Heart left ventricle (tissue), 16 donors: ENCODE measurements at regions of chr17 and their contacts with region 1.

Region 1: DNA sequence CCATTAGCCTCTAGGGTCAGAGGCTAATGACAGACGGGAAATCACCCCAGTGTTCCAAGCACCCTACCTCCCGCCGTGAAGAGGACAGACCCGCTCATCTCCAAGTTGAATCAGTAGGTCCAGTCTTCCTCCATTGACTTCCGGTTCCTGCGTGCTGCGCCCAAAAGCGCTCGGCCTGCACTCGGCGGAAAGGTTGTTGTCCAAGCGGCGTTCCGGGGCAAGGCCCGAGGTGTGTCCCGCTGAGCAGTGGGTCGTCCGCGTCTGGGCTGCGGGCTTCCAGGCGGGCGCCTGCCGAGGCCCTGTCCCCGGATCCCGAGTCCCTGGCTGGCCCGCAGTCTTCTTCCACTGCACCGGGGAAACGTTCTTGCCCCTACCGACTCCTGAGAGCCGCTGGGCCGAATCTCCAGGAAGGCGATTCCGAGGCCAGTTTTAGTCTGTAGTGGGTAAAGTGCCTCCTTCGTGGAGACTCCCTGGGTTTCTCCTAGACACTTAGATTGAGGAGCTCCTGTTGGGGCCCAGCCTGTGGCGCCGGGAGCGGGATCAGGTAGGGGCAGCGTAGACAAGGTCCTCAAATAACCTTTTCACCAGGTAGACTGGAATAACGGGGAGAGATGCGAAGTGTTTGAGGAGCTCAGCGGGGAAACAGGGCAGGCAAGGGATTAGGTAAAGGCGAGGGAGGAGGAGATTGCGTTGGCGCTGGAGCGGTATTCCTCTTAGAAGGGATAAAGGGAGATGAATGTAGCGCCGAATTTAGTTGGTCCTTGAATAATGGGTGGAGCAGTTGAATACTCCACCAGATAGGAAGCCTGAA is at the start of gene TEFM:
- DNase-seq: peak; percentile 89 to 94 (median 92)
- ATAC-seq: peak; percentile 89 to 99 (median 98)
- H3K4me3 ChIP-seq: peak within 1 kb of the TSS; percentile 54 to 95 (median 86)
- H3K27ac ChIP-seq: peak within 1 kb of the TSS; percentile 6 to 96 (median 90)
- H3K4me1 ChIP-seq: peaks cover 0 to 28% (median 15%) of the 10 kb centered on the region in 12 donors
- H3K27me3 ChIP-seq: no peaks in the 10 kb centered on the region
- CTCF ChIP-seq: peak in 1 of 12 donors; percentile 5
- POLR2A ChIP-seq: peak in 1 of 2 donors; percentile 55
- total RNA-seq, gene TEFM: 5.2 to 22.9 (median 13.1) TPM

Region 2: GRCh38 chr17:30970831-30971567 is 64.7 kb after region 1 on chr17 and contains the start of gene RNF135:
- intact Hi-C with region 1: loop called in 5 of 10 experiments (anchors 1 to 10 kb)
- DNase-seq: peak; percentile 89 to 91 (median 90)
- ATAC-seq: peak; percentile 87 to 98 (median 97)
- H3K4me3 ChIP-seq: peak within 1 kb of the TSS; percentile 56 to 95 (median 76)
- H3K27ac ChIP-seq: peak within 1 kb of the TSS; percentile 75 to 98 (median 91)
- H3K4me1 ChIP-seq: peaks cover 0 to 66% (median 6%) of the 10 kb centered on the region in 12 donors
- H3K27me3 ChIP-seq: no peaks in the 10 kb centered on the region
- CTCF ChIP-seq: peak in 7 of 12 donors; percentile 4 to 54 (median 46)
- POLR2A ChIP-seq: peak in 1 of 2 donors; percentile 80
- total RNA-seq, gene RNF135: 3.9 to 19.1 (median 5.6) TPM

Region 3: DNA sequence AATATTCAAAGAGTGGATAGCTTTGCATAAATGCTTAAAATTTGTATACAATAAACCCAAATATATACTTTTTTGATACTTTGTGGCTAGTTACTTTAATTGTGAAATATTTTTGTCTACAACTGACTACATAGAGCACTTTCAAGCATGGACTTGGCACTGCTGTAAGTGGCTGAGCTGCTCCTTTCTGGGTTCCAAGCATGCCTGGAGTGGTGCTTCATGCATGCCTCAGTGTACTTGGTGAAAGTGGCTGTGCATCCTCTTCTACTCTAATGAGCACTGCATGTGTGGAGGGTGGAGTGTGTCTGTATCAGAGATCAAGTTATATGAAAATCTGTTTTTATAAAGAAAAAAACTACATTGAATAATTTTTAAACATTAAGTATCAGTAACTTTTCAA is 296.7 kb after region 1 on chr17:
- intact Hi-C with region 1: loop called in 1 of 10 experiments (anchors 10 kb)
- DNase-seq: no peak
- ATAC-seq: peak in 2 of 4 donors; percentile 50 to 55
- H3K4me3 ChIP-seq: no peak overlapping the region
- H3K27ac ChIP-seq: no peak overlapping the region
- H3K4me1 ChIP-seq: peaks cover 0 to 19% (median 0%) of the 10 kb centered on the region in 12 donors
- H3K27me3 ChIP-seq: no peaks in the 10 kb centered on the region
- CTCF ChIP-seq: no peak
- POLR2A ChIP-seq: no peak

Region 4: DNA sequence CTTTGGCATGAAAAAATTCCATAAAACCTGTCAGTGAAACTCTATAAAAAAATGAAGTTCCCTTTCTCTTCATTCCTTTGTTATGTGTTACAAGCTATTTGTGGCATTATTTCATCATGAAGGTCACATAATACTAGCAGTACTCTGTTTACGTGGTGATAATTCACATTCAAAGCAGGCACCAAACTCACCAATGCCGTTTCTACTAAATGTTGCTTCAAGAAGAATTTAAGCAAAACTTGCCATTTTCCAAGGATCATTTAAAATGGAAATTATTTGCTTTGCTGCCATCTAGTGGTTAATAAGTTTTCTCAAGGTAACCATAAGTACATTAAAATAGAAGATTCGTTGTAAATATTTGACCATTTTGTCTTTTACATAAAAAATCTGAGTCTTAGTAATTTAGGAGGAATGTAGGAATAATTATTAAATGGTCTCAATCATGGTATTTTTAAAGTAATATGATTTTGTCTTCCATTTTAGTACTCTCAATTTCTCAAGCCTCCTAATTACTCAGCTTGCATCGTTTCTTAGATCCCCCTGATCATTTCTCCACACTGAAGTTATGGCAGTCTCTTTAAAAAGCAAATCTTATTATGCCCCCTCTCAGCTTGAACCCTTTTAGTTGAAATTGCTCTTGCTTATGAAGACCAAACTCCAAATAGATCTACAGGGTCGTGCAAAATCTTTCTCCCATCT is 309.9 kb after region 1 on chr17:
- intact Hi-C with region 1: loop called in 2 of 10 experiments (anchors 5 kb)
- DNase-seq: no peak
- ATAC-seq: no peak
- H3K4me3 ChIP-seq: no peak overlapping the region
- H3K27ac ChIP-seq: peak overlapping the region in 1 of 12 donors; percentile 19
- H3K4me1 ChIP-seq: peaks cover 0 to 10% (median 1%) of the 10 kb centered on the region in 12 donors
- H3K27me3 ChIP-seq: no peaks in the 10 kb centered on the region
- CTCF ChIP-seq: peak; percentile 47 to 79 (median 69)
- POLR2A ChIP-seq: no peak